ENCODE measurements at regions of chr1 and their contacts with region 1.

Region 1: GRCh38 chr1:19946331-19946751 is 22.9 kb upstream of the PLA2G2E start:
- DNase-seq: peak; percentile 82 to 88
- H3K4me3 ChIP-seq: no peak overlapping the region
- H3K4me3 Mint-ChIP-seq: peak overlapping the region; percentile 54
- H3K27ac Mint-ChIP-seq: peak overlapping the region; percentile 87
- H3K4me1 ChIP-seq: peaks cover 29% of the 10 kb centered on the region
- H3K4me1 Mint-ChIP-seq: peaks cover 23% of the 10 kb centered on the region
- H3K27me3 ChIP-seq: no peaks in the 10 kb centered on the region
- H3K27me3 Mint-ChIP-seq: no peaks in the 10 kb centered on the region
- CTCF ChIP-seq: no peak

Region 2: DNA sequence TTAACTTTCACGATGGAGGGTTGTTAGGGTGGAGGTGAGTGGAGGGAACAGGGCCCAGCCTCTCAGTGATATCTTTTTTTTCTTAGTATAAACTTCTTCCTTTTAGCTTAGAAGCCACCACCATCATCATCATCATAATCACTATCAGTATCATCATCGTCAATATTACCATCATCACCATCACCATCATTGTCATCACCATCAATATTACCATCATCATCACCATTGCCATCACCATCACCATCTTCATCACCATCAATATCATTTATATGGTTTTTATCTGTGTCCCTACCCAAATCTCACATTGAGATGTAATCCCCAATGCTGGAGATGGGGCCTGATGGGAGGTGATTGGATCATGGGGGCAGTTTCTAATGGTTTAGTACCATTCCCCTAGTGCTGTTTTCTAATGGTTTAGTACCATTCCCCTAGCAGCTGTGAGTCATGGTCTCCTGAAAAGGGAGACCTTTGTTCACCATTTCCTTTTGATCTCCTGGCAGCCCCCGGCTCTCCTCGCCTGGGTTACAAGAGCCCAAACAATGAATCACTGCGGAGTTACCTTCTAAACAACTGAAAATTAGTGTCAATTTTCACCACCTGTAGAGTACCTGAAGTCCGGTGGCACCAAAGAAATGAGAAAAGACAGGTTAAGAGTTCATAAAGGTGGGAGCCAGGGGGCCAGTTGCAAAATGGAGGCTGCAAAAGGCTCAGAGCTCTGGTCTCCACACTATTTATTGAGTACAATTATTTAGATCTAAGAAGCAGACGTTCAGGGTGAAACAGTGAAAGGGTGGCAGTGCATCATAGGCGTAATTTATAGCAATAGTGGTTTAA is 19.8 kb before region 1 on chr1:
- CTCF ChIA-PET with region 1: no interaction called
- POLR2A ChIA-PET with region 1: no interaction called
- intact Hi-C with region 1: loop called (anchors 1 kb)
- DNase-seq: peak; percentile 33 to 52
- H3K4me3 ChIP-seq: no peak overlapping the region
- H3K4me3 Mint-ChIP-seq: no peak overlapping the region
- H3K27ac Mint-ChIP-seq: peak overlapping the region; percentile 71
- H3K4me1 ChIP-seq: peaks cover 47% of the 10 kb centered on the region
- H3K4me1 Mint-ChIP-seq: peaks cover 16% of the 10 kb centered on the region
- H3K27me3 ChIP-seq: no peaks in the 10 kb centered on the region
- H3K27me3 Mint-ChIP-seq: no peaks in the 10 kb centered on the region
- CTCF ChIP-seq: no peak

Region 3: GRCh38 chr1:19974822-19975416 is 28.6 kb after region 1 on chr1:
- CTCF ChIA-PET with region 1: interaction called, 4 read pairs
- POLR2A ChIA-PET with region 1: no interaction called
- intact Hi-C with region 1: loop called (anchors 2 kb)
- DNase-seq: peak; percentile 62 to 69
- H3K4me3 ChIP-seq: no peak overlapping the region
- H3K4me3 Mint-ChIP-seq: no peak overlapping the region
- H3K27ac Mint-ChIP-seq: peak overlapping the region; percentile 42
- H3K4me1 ChIP-seq: peaks cover 20% of the 10 kb centered on the region
- H3K4me1 Mint-ChIP-seq: peaks cover 8% of the 10 kb centered on the region
- H3K27me3 ChIP-seq: no peaks in the 10 kb centered on the region
- H3K27me3 Mint-ChIP-seq: no peaks in the 10 kb centered on the region
- CTCF ChIP-seq: peak; percentile 71 to 92

Region 4: DNA sequence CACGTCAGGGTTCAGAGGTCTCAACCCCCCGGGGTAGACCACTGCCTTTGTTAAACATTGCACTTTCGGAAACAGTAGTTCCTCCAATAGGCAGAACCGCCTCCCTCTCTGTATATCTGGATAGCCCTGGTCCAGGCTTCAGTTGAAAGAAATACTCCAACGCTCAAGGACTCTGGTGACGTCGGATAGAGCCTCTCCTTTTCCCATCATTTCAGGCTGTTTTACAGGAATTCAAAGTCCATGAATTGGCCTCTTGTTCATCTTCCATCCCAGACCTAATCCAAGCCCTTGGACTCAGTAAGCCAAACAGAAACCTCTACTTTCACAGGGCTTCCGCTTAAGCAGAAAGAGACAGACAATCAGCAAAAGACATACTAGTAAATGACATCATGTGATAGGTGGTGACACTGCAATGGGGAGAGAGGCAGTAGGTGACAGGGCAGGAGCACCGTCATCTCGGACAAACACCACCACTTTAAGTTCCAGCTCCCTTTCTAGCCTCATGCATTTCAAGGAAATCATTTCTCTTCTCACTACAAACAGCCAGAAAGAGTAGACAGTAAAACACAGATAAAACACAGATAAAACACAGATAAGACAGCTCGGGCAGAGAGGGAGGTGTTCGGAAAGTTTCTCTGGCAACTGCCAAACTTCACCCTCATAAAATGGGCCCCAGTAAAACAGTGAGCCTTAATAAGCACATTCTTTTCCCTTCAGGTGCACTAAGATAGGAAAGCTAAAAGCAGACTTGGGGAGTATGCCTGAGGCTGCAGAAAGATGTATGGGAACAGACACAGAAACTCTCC is 35.4 kb after region 1 on chr1:
- CTCF ChIA-PET with region 1: interaction called, 5 read pairs
- POLR2A ChIA-PET with region 1: no interaction called
- intact Hi-C with region 1: loop called (anchors 1 kb)
- DNase-seq: peak; percentile 39 to 55
- H3K4me3 ChIP-seq: no peak overlapping the region
- H3K4me3 Mint-ChIP-seq: peak overlapping the region; percentile 59
- H3K27ac Mint-ChIP-seq: peak overlapping the region; percentile 65
- H3K4me1 ChIP-seq: peaks cover 29% of the 10 kb centered on the region
- H3K4me1 Mint-ChIP-seq: peaks cover 33% of the 10 kb centered on the region
- H3K27me3 ChIP-seq: no peaks in the 10 kb centered on the region
- H3K27me3 Mint-ChIP-seq: no peaks in the 10 kb centered on the region
- CTCF ChIP-seq: no peak

Measured in Caco-2 (cell line).